ENCODE measurements at regions of chr9 and their contacts with region 1.

Region 1: GRCh38 chr9:2857564-2858198 is 13.8 kb upstream of the PUM3 start:
- DNase-seq: peak in 4 of 6 donors; percentile 43 to 74 (median 48)
- ATAC-seq: peak; percentile 77 to 96 (median 93)
- H3K4me3 ChIP-seq: no peak overlapping the region
- H3K27ac ChIP-seq: no peak overlapping the region
- H3K4me1 ChIP-seq: no peaks in the 10 kb centered on the region
- H3K27me3 ChIP-seq: peaks cover 0 to 5% (median 0%) of the 10 kb centered on the region in 4 donors
- CTCF ChIP-seq: peak; percentile 62 to 79 (median 71)

Region 2: DNA sequence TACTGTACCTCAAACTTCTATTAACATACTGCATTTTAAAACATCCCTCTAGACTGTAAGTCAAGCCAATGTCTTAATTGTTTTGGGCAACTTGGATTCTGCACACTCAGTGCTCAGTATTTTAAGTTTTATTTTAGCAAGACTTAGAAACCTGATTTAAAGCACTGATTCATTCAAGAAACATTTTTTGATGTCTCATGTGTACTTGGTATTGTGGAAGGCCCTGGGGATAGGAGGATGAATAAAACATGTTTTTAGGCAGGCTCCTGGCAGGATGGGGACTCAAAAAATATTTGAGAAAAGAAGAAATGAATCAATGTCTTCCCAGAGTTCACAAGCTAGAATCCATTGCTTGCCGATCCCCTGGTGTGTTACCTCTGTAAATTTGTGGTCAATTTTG is 320.3 kb after region 1 on chr9:
- intact Hi-C with region 1: loop called in 2 of 3 experiments (anchors 5 to 10 kb)
- DNase-seq: no peak
- ATAC-seq: peak in 1 of 4 donors; percentile 11
- H3K4me3 ChIP-seq: no peak overlapping the region
- H3K27ac ChIP-seq: no peak overlapping the region
- H3K4me1 ChIP-seq: no peaks in the 10 kb centered on the region
- H3K27me3 ChIP-seq: no peaks in the 10 kb centered on the region
- CTCF ChIP-seq: no peak

Region 3: GRCh38 chr9:3191715-3192114 is 334.0 kb after region 1 on chr9:
- intact Hi-C with region 1: loop called in 1 of 3 experiments (anchors 10 kb)
- DNase-seq: no peak
- ATAC-seq: no peak
- H3K4me3 ChIP-seq: no peak overlapping the region
- H3K27ac ChIP-seq: no peak overlapping the region
- H3K4me1 ChIP-seq: no peaks in the 10 kb centered on the region
- H3K27me3 ChIP-seq: no peaks in the 10 kb centered on the region
- CTCF ChIP-seq: no peak

Region 4: DNA sequence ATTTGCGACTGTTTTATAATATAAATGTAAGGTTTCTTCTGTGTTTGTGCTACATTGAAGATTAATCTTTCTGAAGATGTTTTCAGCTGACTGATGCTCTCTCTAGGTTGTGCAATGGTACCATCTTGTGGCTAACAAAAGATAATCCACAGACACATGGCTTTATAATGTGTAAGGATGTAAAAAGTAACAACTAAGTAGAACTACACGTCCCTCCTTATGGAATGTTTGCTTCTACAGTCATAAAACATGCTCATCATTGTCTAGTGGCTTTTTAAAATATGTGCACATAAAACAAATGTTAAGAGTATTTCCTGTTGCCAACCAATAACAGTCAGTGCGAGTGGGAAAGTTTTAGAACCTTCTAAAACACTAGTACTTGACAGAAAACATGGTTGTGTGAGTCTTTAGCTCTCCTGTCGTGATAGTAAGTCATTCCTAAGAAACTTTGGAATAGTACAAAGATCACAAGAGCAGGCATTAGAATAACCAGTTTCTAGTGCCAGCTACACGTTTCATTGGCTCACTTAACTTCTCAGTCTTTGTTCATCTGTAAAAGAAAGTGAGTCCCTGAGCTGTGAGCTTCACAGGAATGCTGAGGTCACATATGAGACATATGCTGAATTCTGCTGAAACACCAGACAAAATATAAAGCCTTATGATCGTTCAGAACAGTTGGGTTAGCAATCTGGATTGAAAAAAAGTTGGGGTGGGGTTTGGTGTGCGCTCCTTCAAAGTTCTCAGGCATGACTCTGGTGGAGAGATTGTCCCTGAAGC is 1517.9 kb after region 1 on chr9:
- intact Hi-C with region 1: loop called in 1 of 3 experiments (anchors 10 kb)
- DNase-seq: no peak
- ATAC-seq: peak in 3 of 4 donors; percentile 50 to 66 (median 55)
- H3K4me3 ChIP-seq: no peak overlapping the region
- H3K27ac ChIP-seq: no peak overlapping the region
- H3K4me1 ChIP-seq: no peaks in the 10 kb centered on the region
- H3K27me3 ChIP-seq: no peaks in the 10 kb centered on the region
- CTCF ChIP-seq: peak in 1 of 4 donors; percentile 16